Naive thymus-derived CD4-positive, alpha-beta T cell (primary cell): ENCODE measurements at regions of chr12 and their contacts with region 1.

Region 1: GRCh38 chr12:102061560-102062418 is at the start of gene WASHC3:
- DNase-seq: peak; percentile 87 to 96 (median 93)
- ATAC-seq: peak; percentile 97
- H3K4me3 ChIP-seq: peak within 1 kb of the TSS; percentile 89
- H3K4me3 Mint-ChIP-seq: peak within 1 kb of the TSS; percentile 84 to 99 (median 97)
- H3K27ac ChIP-seq: peak within 1 kb of the TSS; percentile 86
- H3K27ac Mint-ChIP-seq: peak within 1 kb of the TSS; percentile 94 to 100 (median 99)
- H3K4me1 ChIP-seq: peaks cover 16 to 17% of the 10 kb centered on the region in 2 donors
- H3K4me1 Mint-ChIP-seq: peaks cover 15 to 54% (median 49%) of the 10 kb centered on the region in 7 donors
- H3K27me3 ChIP-seq: no peaks in the 10 kb centered on the region
- H3K27me3 Mint-ChIP-seq: peaks cover 0 to 21% (median 5%) of the 10 kb centered on the region in 5 donors
- total RNA-seq, gene WASHC3: 32.8 to 59.6 (median 49.6) TPM

Region 2: GRCh38 chr12:100142851-100143559 is 1918.8 kb before region 1 on chr12 and contains the start of gene BLTP3B:
- CTCF ChIA-PET with region 1: no interaction called
- POLR2A ChIA-PET with region 1: no interaction called
- intact Hi-C with region 1: loop called in 1 of 2 experiments (anchors 5 kb)
- DNase-seq: peak; percentile 70 to 91 (median 84)
- ATAC-seq: peak; percentile 98
- H3K4me3 ChIP-seq: peak within 1 kb of the TSS; percentile 84
- H3K4me3 Mint-ChIP-seq: peak within 1 kb of the TSS; percentile 86 to 97 (median 95)
- H3K27ac ChIP-seq: peak within 1 kb of the TSS; percentile 93
- H3K27ac Mint-ChIP-seq: peak within 1 kb of the TSS; percentile 85 to 98 (median 94)
- H3K4me1 ChIP-seq: peaks cover 7 to 14% of the 10 kb centered on the region in 2 donors
- H3K4me1 Mint-ChIP-seq: peaks cover 31 to 46% (median 33%) of the 10 kb centered on the region in 7 donors
- H3K27me3 ChIP-seq: no peaks in the 10 kb centered on the region
- H3K27me3 Mint-ChIP-seq: no peaks in the 10 kb centered on the region
- total RNA-seq, gene BLTP3B: 13.1 to 28.9 (median 18.0) TPM

Region 3: GRCh38 chr12:101280006-101280505 is 781.7 kb before region 1 on chr12 and contains the start of gene UTP20:
- CTCF ChIA-PET with region 1: no interaction called
- POLR2A ChIA-PET with region 1: no interaction called
- intact Hi-C with region 1: loop called (anchors 2 to 5 kb)
- DNase-seq: peak; percentile 90 to 94 (median 92)
- ATAC-seq: peak; percentile 100
- H3K4me3 ChIP-seq: peak within 1 kb of the TSS; percentile 72
- H3K4me3 Mint-ChIP-seq: peak within 1 kb of the TSS; percentile 92 to 97 (median 96)
- H3K27ac ChIP-seq: peak within 1 kb of the TSS; percentile 63
- H3K27ac Mint-ChIP-seq: peak within 1 kb of the TSS; percentile 77 to 94 (median 87)
- H3K4me1 ChIP-seq: peaks cover 5% of the 10 kb centered on the region in 2 donors
- H3K4me1 Mint-ChIP-seq: peaks cover 11 to 28% (median 16%) of the 10 kb centered on the region in 7 donors
- H3K27me3 ChIP-seq: no peaks in the 10 kb centered on the region
- H3K27me3 Mint-ChIP-seq: peaks cover 8 to 24% (median 16%) of the 10 kb centered on the region in 5 donors
- total RNA-seq, gene UTP20: 10.8 to 20.8 (median 14.9) TPM

Region 4: DNA sequence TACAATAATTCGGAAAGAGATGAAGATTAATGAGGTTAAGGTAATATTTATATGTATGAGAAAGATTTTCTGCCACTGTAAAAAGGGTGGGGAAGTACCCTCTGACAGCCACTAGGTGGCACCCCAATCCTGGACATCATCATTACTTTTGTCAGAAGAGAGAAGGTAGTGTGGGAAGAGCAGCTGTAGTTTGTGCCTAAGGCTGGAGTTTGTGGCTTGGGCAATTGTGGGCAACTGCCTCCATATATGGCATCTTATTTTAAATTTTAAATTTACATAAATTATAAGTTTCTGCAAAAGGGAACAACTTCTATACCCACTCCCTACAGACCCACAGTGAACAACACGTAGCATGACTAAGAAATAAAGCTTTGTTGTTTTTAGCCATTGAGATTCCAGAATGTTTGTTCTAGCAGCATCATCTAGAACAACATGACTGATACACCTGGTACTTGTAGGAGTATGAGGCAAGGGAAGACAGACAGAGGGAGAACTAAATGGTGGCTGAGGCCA is 288.1 kb before region 1 on chr12:
- CTCF ChIA-PET with region 1: no interaction called
- POLR2A ChIA-PET with region 1: no interaction called
- intact Hi-C with region 1: loop called in 1 of 2 experiments (anchors 10 kb)
- DNase-seq: peak; percentile 37 to 76 (median 72)
- ATAC-seq: peak; percentile 94
- H3K4me3 ChIP-seq: no peak overlapping the region
- H3K4me3 Mint-ChIP-seq: no peak overlapping the region
- H3K27ac ChIP-seq: no peak overlapping the region
- H3K27ac Mint-ChIP-seq: peak overlapping the region in 2 of 9 donors; percentile 25 to 65
- H3K4me1 ChIP-seq: no peaks in the 10 kb centered on the region
- H3K4me1 Mint-ChIP-seq: peaks cover 0 to 50% (median 9%) of the 10 kb centered on the region in 7 donors
- H3K27me3 ChIP-seq: no peaks in the 10 kb centered on the region
- H3K27me3 Mint-ChIP-seq: no peaks in the 10 kb centered on the region

Region 5: GRCh38 chr12:101939856-101940265 is 121.9 kb before region 1 on chr12:
- CTCF ChIA-PET with region 1: no interaction called
- POLR2A ChIA-PET with region 1: no interaction called
- intact Hi-C with region 1: loop called in 1 of 2 experiments (anchors 5 kb)
- DNase-seq: peak in 8 of 9 donors; percentile 34 to 69 (median 56)
- ATAC-seq: peak; percentile 70
- H3K4me3 ChIP-seq: no peak overlapping the region
- H3K4me3 Mint-ChIP-seq: no peak overlapping the region
- H3K27ac ChIP-seq: no peak overlapping the region
- H3K27ac Mint-ChIP-seq: peak overlapping the region in 1 of 9 donors; percentile 32
- H3K4me1 ChIP-seq: no peaks in the 10 kb centered on the region
- H3K4me1 Mint-ChIP-seq: peaks cover 0 to 34% (median 0%) of the 10 kb centered on the region in 7 donors
- H3K27me3 ChIP-seq: no peaks in the 10 kb centered on the region
- H3K27me3 Mint-ChIP-seq: peaks cover 15 to 21% (median 19%) of the 10 kb centered on the region in 5 donors

Region 6: GRCh38 chr12:102197789-102198188 is 136.0 kb after region 1 on chr12 and contains the start of gene PMCH:
- CTCF ChIA-PET with region 1: no interaction called
- POLR2A ChIA-PET with region 1: no interaction called
- intact Hi-C with region 1: loop called in 1 of 2 experiments (anchors 2 kb)
- DNase-seq: no peak
- ATAC-seq: no peak
- H3K4me3 ChIP-seq: no peak within 1 kb of the TSS
- H3K4me3 Mint-ChIP-seq: peak within 1 kb of the TSS in 1 of 10 donors; percentile 24
- H3K27ac ChIP-seq: no peak within 1 kb of the TSS
- H3K27ac Mint-ChIP-seq: peak within 1 kb of the TSS in 1 of 9 donors; percentile 60
- H3K4me1 ChIP-seq: no peaks in the 10 kb centered on the region
- H3K4me1 Mint-ChIP-seq: peaks cover 0 to 22% (median 0%) of the 10 kb centered on the region in 7 donors
- H3K27me3 ChIP-seq: no peaks in the 10 kb centered on the region
- H3K27me3 Mint-ChIP-seq: no peaks in the 10 kb centered on the region
- total RNA-seq, gene PMCH: 2.9 TPM in 1 of 5 experiments, not detected in the others

Region 7: GRCh38 chr12:102281231-102281630 is 219.4 kb after region 1 on chr12:
- CTCF ChIA-PET with region 1: no interaction called
- POLR2A ChIA-PET with region 1: no interaction called
- intact Hi-C with region 1: no loop called
- DNase-seq: no peak
- ATAC-seq: no peak
- H3K4me3 ChIP-seq: no peak overlapping the region
- H3K4me3 Mint-ChIP-seq: no peak overlapping the region
- H3K27ac ChIP-seq: no peak overlapping the region
- H3K27ac Mint-ChIP-seq: no peak overlapping the region
- H3K4me1 ChIP-seq: no peaks in the 10 kb centered on the region
- H3K4me1 Mint-ChIP-seq: no peaks in the 10 kb centered on the region
- H3K27me3 ChIP-seq: no peaks in the 10 kb centered on the region
- H3K27me3 Mint-ChIP-seq: peaks cover 0 to 7% (median 0%) of the 10 kb centered on the region in 5 donors

Region 8: DNA sequence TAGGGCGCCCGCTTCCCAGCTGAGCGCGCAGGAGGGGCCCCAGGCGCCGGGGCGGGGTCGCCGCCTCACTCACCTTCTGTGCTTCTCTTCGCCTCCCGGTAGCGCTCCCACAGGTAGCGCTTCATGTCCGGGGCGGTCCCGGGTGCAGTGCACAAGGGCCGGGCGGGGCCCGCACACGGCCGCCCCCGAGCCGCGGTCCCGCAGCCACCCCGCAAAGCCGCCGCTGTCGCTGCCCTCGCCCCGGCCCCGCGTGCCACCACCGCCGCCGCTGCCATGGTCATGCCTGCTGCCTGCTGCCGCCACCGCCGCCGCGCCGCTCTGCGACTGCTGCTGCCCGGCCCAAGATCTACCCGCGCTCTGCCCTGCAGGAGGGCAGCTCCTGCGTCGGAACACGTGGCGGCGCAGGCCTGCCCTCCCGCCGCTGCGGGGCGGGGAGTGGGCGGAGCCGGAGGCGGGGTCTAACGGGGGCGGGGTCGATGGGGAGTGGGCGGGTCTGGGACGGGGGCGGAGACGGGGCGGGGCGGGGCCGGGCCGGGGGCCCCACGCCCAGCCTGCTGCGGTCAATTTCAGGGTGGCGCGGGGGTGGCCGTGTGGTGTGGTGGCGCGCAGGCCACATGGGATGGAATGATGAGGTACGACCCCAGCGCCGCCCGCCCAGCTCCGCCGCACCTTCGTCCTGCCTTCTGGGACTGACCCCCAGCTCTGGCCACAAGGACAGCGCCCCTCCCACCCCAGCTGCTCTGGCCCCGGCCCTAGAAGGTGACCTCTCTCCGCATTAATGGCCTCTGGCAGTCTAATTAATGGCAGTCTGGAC is 1779.3 kb after region 1 on chr12 and contains the start of gene NT5DC3:
- CTCF ChIA-PET with region 1: no interaction called
- POLR2A ChIA-PET with region 1: no interaction called
- intact Hi-C with region 1: loop called (anchors 2 to 10 kb)
- DNase-seq: peak; percentile 77 to 93 (median 87)
- ATAC-seq: peak; percentile 98
- H3K4me3 ChIP-seq: peak within 1 kb of the TSS; percentile 68
- H3K4me3 Mint-ChIP-seq: peak within 1 kb of the TSS; percentile 80 to 92 (median 86)
- H3K27ac ChIP-seq: peak within 1 kb of the TSS; percentile 55
- H3K27ac Mint-ChIP-seq: peak within 1 kb of the TSS in 8 of 9 donors; percentile 61 to 89 (median 76)
- H3K4me1 ChIP-seq: peaks cover 7 to 9% of the 10 kb centered on the region in 2 donors
- H3K4me1 Mint-ChIP-seq: peaks cover 5 to 26% (median 18%) of the 10 kb centered on the region in 7 donors
- H3K27me3 ChIP-seq: no peaks in the 10 kb centered on the region
- H3K27me3 Mint-ChIP-seq: peaks cover 0 to 35% (median 0%) of the 10 kb centered on the region in 5 donors
- total RNA-seq, gene NT5DC3: 3.9 to 5.0 (median 4.5) TPM